Activated CD4-positive, alpha-beta T cell treated with anti-CD3 and anti-CD28 coated beads, Interleukin-2, amount 10 ng/mL, durations not matched to agents 24 days and 14 days (primary cell): ENCODE measurements at regions of chr2 and their contacts with region 1.

Region 1: DNA sequence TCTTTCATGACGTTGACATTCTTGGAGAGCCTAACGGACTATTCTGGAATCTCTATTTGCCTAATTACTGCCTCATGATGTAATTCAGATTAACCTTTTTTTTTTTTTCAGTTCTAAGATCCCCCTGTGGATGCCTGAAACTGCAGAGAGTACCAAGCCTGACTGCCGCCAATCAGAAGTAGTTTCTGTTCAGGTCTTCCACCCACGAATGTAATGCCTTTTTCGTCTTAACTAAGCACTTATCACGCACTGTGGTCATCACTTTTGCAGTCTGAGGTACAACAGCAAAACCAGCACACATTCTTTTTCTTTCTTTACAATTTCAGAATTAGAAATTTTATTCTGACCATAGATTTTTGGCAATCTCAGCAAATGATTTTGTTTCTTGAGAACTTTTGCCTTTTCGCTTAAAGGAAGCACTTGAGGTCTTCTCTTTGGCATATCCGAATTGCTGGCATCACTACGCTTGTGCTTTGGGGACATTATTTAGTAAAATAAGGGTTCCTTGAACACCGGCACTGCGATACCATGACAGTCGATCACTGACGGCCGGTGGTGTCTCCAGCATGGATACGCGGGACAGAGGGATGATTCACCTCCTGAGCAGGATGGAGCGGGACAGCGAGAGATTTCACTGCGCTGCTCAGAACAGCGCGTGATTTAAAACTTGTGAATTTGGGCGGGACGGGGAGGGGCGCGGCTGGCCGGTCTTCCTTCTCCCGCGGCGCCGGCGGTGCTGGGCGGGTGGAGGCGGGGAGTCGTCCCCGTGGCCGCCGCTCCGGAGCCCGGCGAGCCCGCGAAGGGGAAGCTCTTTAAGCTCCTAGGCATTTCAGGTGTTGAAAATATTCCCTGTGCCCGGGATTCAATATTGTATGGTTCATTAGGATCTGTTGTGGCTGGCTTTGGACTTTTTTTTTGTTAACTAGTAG is 32.0 kb upstream of the GPR55 start:
- DNase-seq: peak; percentile 69
- H3K4me3 Mint-ChIP-seq: peak overlapping the region; percentile 83
- H3K27ac Mint-ChIP-seq: peak overlapping the region; percentile 77
- H3K4me1 Mint-ChIP-seq: peaks cover 22% of the 10 kb centered on the region
- H3K27me3 Mint-ChIP-seq: peaks cover 75% of the 10 kb centered on the region

Region 2: GRCh38 chr2:230924470-230925341 is 32.4 kb before region 1 on chr2 and contains the start of gene GPR55:
- intact Hi-C with region 1: loop called (anchors 1 kb)
- DNase-seq: peak; percentile 76
- H3K4me3 Mint-ChIP-seq: peak within 1 kb of the TSS; percentile 66
- H3K27ac Mint-ChIP-seq: peak within 1 kb of the TSS; percentile 82
- H3K4me1 Mint-ChIP-seq: peaks cover 42% of the 10 kb centered on the region
- H3K27me3 Mint-ChIP-seq: peaks cover 24% of the 10 kb centered on the region
- total RNA-seq, gene GPR55: 0.23 and 0.38 TPM in 2 replicates

Region 3: GRCh38 chr2:230974096-230974913 is 17.2 kb after region 1 on chr2:
- intact Hi-C with region 1: loop called (anchors 1 kb)
- DNase-seq: peak; percentile 86
- H3K4me3 Mint-ChIP-seq: peak overlapping the region; percentile 24
- H3K27ac Mint-ChIP-seq: peak overlapping the region; percentile 61
- H3K4me1 Mint-ChIP-seq: peaks cover 33% of the 10 kb centered on the region
- H3K27me3 Mint-ChIP-seq: peaks cover 28% of the 10 kb centered on the region